ENCODE measurements at regions of chr2 and their contacts with region 1.

Region 1: DNA sequence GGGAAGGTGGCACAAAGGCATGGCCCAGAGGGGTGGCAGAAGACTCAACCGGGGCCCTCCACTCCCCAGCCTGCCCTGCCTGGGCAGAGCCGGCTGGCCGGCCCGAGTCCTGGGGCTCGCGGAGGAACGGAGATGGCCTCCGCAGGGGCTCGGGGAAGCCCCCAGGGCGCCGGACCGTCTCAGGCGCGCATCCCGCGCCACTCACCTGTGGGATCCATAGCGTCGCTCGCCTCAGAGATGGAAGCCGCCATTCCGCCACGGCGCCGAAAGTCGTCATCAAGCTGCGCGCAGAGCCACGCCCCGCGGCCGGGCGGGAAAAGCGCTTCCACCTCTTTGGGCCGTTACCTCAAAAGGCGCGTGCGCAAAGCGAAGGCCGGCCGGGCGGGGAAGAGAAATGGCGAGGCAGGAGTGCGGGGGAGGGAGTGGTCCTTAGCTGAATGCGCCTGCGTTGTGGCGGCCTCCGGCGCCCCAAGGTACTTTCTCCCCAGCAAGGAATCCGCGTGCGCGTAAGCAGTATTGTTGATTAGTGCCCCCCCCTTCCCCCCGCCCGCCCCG is at the start of gene SMPD4:
- DNase-seq: peak; percentile 97
- ATAC-seq: peak; percentile 75
- H3K4me3 Mint-ChIP-seq: peak within 1 kb of the TSS; percentile 93
- H3K27ac Mint-ChIP-seq: peak within 1 kb of the TSS; percentile 91
- H3K4me1 Mint-ChIP-seq: peaks cover 31% of the 10 kb centered on the region
- H3K27me3 Mint-ChIP-seq: no peaks in the 10 kb centered on the region
- CTCF ChIP-seq: no peak
- total RNA-seq, gene SMPD4: 58.5 and 66.8 TPM in 2 replicates

Region 2: DNA sequence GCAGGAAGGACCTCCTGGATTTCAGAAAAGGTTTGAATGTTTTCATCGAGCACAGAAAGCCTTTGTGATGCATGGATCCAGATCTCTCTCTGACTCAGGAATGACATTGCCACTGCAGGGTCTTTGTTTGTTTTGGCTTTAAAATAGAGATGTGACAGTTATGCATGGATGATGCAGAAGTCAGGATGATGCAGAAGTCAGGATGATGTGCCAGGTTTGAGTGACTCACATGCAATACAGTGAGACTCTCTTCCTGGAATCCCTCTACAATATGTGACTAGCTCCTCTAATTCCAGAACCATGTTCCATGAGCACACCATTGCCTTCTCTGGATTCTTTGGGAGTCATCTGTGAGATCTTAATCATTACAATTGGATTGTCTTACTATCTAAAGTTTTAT is 379.8 kb before region 1 on chr2:
- CTCF ChIA-PET with region 1: no interaction called
- POLR2A ChIA-PET with region 1: no interaction called
- intact Hi-C with region 1: no loop called
- DNase-seq: no peak
- ATAC-seq: no peak
- H3K4me3 Mint-ChIP-seq: no peak overlapping the region
- H3K27ac Mint-ChIP-seq: no peak overlapping the region
- H3K4me1 Mint-ChIP-seq: no peaks in the 10 kb centered on the region
- H3K27me3 Mint-ChIP-seq: no peaks in the 10 kb centered on the region
- CTCF ChIP-seq: no peak

Region 3: GRCh38 chr2:129877289-129877779 is 304.1 kb before region 1 on chr2:
- CTCF ChIA-PET with region 1: no interaction called
- POLR2A ChIA-PET with region 1: interaction called, 6 read pairs
- intact Hi-C with region 1: loop called (anchors 1 kb)
- DNase-seq: peak; percentile 71
- ATAC-seq: peak; percentile 94
- H3K4me3 Mint-ChIP-seq: peak overlapping the region; percentile 96
- H3K27ac Mint-ChIP-seq: peak overlapping the region; percentile 86
- H3K4me1 Mint-ChIP-seq: peaks cover 13% of the 10 kb centered on the region
- H3K27me3 Mint-ChIP-seq: peaks cover 2% of the 10 kb centered on the region
- CTCF ChIP-seq: no peak

Region 4: DNA sequence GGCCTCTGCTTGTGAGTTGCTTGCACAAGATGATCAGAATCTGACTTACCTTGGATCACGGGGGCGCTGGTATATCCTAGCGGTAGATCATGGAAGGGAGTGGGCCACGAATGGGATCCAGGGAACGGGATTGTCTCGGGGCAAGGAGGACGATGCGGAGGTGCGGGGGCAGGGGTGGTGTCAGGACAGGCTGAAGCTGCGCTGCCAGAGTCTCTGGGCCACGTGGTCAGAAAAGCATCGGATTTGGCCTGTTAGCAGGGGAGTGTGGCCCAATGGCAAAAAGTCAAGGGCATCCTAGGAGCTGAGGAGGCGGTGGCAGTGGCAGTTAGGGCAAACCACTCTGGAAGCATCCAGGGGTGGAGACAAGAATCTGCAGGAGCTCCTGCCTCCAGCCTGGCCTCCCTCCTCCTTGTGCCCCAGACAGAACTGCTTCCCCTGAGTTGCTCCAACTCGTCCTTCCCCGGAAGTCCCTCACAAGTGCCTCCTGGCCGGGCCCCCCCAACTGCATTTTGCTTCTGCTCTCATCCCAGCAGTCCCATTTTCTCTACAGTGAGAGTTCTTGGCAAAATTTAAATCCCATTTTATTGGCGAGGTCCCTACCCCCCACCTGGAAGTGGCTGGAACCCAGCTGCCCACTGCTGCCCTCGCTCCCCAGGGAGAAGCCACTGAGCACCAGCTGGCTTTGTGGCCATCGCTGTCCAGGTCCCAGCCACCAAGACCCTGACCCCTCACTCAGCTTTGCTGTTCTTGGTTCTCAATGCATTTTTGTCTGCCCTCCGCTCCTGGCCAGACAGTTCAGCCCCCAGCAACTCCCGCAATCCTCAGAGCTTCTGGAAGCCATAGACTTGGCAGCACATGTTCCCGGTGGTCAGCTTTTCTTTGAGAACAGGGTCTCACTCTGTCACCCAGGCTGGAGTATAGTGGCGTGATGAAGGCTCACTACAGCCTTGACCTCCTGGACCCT is 30.9 kb before region 1 on chr2:
- CTCF ChIA-PET with region 1: interaction called, 3 read pairs
- POLR2A ChIA-PET with region 1: no interaction called
- intact Hi-C with region 1: loop called (anchors 1 kb)
- DNase-seq: no peak
- ATAC-seq: no peak
- H3K4me3 Mint-ChIP-seq: no peak overlapping the region
- H3K27ac Mint-ChIP-seq: no peak overlapping the region
- H3K4me1 Mint-ChIP-seq: no peaks in the 10 kb centered on the region
- H3K27me3 Mint-ChIP-seq: peaks cover 5% of the 10 kb centered on the region
- CTCF ChIP-seq: no peak

Region 5: DNA sequence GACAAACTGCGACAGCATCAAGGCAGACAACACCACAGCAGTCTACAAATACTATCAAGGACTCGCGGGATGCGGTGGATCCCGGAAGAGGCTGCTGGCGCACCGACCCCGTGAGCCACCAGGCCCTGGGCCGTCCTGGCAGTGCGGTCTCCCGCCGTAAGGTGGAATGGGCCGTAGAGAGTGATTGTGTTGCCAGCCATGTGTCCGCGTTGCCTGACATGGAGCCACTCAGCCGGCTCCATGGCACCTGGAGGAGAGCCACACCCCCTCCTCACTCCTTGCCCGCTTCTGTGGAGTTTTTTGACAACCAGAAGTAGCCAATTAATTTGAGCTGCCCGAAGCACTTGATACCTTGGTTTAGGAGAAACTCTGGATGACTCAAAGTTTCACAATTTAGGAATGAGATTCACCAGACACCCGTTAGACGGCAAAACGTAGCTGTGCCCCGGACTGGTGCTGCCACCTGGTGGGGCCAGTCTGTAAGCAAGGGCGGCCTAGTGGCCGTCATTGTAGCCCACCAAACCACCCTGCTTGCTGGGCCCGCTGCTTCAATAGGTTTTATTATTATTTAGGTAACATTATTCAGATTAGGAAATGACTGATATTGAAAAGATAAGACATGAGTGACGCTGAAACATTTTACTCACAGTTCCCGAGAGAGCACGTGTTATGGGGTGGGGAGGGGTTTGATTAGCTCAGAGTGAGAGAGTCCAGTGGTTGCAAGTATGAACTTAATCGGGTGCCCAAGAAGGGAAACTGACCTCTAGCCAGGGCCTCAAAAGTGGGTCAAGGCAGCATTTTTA is 151.1 kb after region 1 on chr2:
- CTCF ChIA-PET with region 1: no interaction called
- POLR2A ChIA-PET with region 1: interaction called, 10 read pairs
- intact Hi-C with region 1: loop called (anchors 2 kb)
- DNase-seq: peak; percentile 65
- ATAC-seq: peak; percentile 91
- H3K4me3 Mint-ChIP-seq: peak overlapping the region; percentile 36
- H3K27ac Mint-ChIP-seq: no peak overlapping the region
- H3K4me1 Mint-ChIP-seq: peaks cover 4% of the 10 kb centered on the region
- H3K27me3 Mint-ChIP-seq: peaks cover 20% of the 10 kb centered on the region
- CTCF ChIP-seq: peak; percentile 94

Region 6: GRCh38 chr2:130776550-130776949 is 595.1 kb after region 1 on chr2:
- CTCF ChIA-PET with region 1: no interaction called
- POLR2A ChIA-PET with region 1: no interaction called
- intact Hi-C with region 1: no loop called
- DNase-seq: no peak
- ATAC-seq: no peak
- H3K4me3 Mint-ChIP-seq: no peak overlapping the region
- H3K27ac Mint-ChIP-seq: no peak overlapping the region
- H3K4me1 Mint-ChIP-seq: no peaks in the 10 kb centered on the region
- H3K27me3 Mint-ChIP-seq: peaks cover 6% of the 10 kb centered on the region
- CTCF ChIP-seq: no peak

Region 7: GRCh38 chr2:131492418-131493198 is 1311.2 kb after region 1 on chr2:
- CTCF ChIA-PET with region 1: no interaction called
- POLR2A ChIA-PET with region 1: no interaction called
- intact Hi-C with region 1: loop called (anchors 1 kb)
- DNase-seq: peak; percentile 97
- ATAC-seq: peak; percentile 86
- H3K4me3 Mint-ChIP-seq: peak overlapping the region; percentile 97
- H3K27ac Mint-ChIP-seq: peak overlapping the region; percentile 83
- H3K4me1 Mint-ChIP-seq: peaks cover 38% of the 10 kb centered on the region
- H3K27me3 Mint-ChIP-seq: no peaks in the 10 kb centered on the region
- CTCF ChIP-seq: peak; percentile 39